MCF 10A (cell line): ENCODE measurements at regions of chr10 and their contacts with region 1.

Region 1: GRCh38 chr10:116796910-116797513 is 52.3 kb upstream of the ENO4 start:
- DNase-seq: peak; percentile 78
- H3K4me3 Mint-ChIP-seq: no peak overlapping the region
- H3K27ac Mint-ChIP-seq: no peak overlapping the region
- H3K4me1 Mint-ChIP-seq: no peaks in the 10 kb centered on the region
- H3K27me3 Mint-ChIP-seq: no peaks in the 10 kb centered on the region
- CTCF ChIP-seq: peak; percentile 96

Region 2: DNA sequence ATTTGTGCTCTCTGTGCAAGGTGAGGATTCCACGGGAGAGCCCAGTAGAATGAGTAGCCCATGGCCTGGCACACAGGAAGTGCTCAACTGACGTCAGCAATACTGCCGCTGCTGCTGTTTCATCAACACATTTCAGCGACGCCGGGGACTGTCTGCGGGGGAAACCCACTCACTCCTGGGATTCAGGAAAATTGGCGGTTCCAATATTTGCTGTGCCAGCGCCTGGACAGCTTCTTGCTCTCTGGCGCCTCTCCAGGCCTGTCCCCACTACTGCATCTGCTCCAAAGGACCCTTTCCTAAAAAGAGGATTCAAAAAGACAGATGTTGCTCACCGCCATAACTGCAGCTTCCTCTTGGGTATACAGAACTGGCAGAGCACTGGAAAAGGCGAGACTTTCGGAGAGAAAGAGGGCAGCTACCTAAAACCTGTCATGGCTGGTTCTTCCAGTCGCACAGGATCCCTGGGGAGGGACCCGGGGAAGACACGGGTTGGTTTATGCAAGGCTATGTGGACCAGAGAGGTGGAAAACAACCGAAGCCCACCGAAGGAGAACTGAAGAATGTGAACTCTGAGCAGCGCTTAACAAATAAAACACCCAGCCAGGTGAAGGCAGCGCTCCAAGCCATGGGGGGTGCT is 12.6 kb after region 1 on chr10:
- CTCF ChIA-PET with region 1: interaction called, 23 read pairs
- POLR2A ChIA-PET with region 1: no interaction called
- intact Hi-C with region 1: no loop called
- DNase-seq: peak; percentile 40
- H3K4me3 Mint-ChIP-seq: no peak overlapping the region
- H3K27ac Mint-ChIP-seq: no peak overlapping the region
- H3K4me1 Mint-ChIP-seq: no peaks in the 10 kb centered on the region
- H3K27me3 Mint-ChIP-seq: peaks cover 35% of the 10 kb centered on the region
- CTCF ChIP-seq: peak; percentile 31

Region 3: DNA sequence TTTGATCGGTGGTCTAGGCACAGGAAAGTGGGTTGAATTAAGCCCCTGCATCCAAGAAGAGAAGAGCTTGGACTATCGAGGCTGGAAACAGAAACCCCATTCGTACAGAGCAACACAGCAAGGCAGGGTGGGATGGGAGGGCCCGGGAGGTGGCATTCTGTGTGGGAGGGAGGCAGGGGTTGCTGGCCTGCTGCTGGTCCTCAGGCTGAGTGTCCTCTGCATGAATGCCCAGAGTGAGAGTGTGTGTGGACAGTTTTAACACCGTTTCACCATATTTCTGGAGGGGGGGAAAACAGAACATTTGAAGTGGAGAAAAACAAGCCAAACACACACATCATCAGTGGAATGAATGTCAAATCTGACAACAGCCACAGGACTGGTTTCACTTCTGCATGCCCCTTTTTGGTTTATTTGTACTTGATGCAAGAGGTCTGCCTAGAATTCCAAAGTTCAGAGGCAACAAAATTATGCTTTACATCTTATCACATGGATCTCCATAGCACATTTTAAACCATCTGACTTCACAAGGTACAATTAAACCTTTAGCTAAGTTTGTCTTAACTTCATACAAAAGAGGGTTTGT is 41.2 kb after region 1 on chr10:
- CTCF ChIA-PET with region 1: interaction called, 10 read pairs
- POLR2A ChIA-PET with region 1: no interaction called
- intact Hi-C with region 1: no loop called
- DNase-seq: no peak
- H3K4me3 Mint-ChIP-seq: no peak overlapping the region
- H3K27ac Mint-ChIP-seq: no peak overlapping the region
- H3K4me1 Mint-ChIP-seq: no peaks in the 10 kb centered on the region
- H3K27me3 Mint-ChIP-seq: no peaks in the 10 kb centered on the region
- CTCF ChIP-seq: no peak

Region 4: GRCh38 chr10:117074621-117075020 is 277.6 kb after region 1 on chr10:
- CTCF ChIA-PET with region 1: interaction called, 6 read pairs
- POLR2A ChIA-PET with region 1: no interaction called
- intact Hi-C with region 1: loop called (anchors 2 kb)
- DNase-seq: peak; percentile 52
- H3K4me3 Mint-ChIP-seq: no peak overlapping the region
- H3K27ac Mint-ChIP-seq: no peak overlapping the region
- H3K4me1 Mint-ChIP-seq: peaks cover 8% of the 10 kb centered on the region
- H3K27me3 Mint-ChIP-seq: no peaks in the 10 kb centered on the region
- CTCF ChIP-seq: peak; percentile 33